ENCODE measurements at regions of chr16 and their contacts with region 1.

Region 1: DNA sequence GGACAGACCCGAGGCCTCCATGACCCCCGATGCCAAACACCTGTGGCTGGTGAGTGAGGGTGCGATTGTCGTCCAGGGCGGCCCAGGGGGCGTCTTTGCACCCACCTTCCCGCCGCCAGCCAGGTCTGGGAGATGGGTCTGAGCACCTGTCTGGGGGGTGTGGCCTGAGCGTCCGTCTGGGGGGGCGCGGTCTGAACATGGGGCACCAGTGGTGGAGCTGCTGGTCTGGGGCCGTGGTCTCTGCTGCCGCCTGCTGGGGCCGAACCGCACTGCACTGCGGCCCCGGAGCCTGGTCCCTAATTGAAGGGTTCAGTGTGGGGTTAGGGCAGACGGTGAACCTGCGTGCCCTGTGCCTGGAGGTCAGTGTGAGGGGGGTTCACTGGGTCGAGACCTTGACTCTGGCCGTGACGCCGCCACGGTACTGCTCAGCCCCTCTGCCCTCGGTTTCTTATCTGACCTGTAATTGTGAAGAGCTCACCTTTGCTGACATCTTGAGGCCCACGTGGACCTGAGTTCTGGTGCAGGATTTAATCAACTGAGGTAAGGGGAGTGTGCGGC is 12.6 kb upstream of the TCF25 start:
- DNase-seq: peak; percentile 32
- H3K4me3 ChIP-seq: no peak overlapping the region
- H3K27ac ChIP-seq: no peak overlapping the region
- H3K4me1 ChIP-seq: peaks cover 23% of the 10 kb centered on the region
- H3K27me3 ChIP-seq: no peaks in the 10 kb centered on the region
- CTCF ChIP-seq: peak; percentile 91 to 98

Region 2: DNA sequence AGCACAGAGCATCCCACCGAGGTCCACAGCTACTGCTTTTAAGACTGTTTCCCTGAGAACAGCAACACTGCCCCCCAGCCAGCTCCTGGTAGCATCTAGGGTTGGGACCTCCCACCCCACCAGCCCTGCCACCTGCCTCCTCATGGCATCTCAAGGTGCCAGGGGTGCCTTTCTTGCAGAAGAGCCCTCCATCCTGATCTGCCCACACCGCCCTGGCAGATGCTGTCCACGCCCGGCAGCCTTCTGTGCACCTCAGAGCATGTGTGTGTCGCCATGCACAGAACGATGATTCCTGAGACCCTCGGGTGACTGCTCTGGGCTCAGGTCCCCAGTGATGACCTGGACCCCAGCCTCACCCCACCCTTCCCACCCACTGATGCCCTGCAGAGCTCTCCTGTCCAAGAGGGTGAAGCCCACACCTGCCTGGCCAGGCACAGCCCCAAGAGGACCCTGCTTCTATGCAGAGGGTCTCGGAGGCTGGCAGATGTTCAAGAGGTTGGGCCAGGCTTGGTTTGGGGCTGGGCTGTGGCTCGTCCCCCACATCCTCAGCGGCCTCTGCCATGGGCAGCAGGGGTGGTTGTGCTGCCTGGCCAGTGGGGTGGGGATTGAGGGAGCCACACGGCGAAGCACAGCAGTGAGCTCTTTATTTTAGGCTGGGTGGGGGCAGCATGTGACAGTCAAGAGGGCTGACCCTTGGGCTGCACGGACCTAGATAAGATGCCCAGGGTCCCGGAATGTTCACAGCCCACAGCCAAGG is 154.1 kb before region 1 on chr16:
- CTCF ChIA-PET with region 1: interaction called, 4 read pairs
- dilution Hi-C with region 1: no loop called
- in situ Hi-C with region 1: no loop called
- intact Hi-C with region 1: loop called (anchors 1 kb)
- DNase-seq: no peak
- H3K4me3 ChIP-seq: no peak overlapping the region
- H3K27ac ChIP-seq: no peak overlapping the region
- H3K4me1 ChIP-seq: peaks cover 3% of the 10 kb centered on the region
- H3K27me3 ChIP-seq: no peaks in the 10 kb centered on the region
- CTCF ChIP-seq: no peak

Region 3: GRCh38 chr16:89791278-89791995 is 69.4 kb before region 1 on chr16:
- CTCF ChIA-PET with region 1: interaction called, 4 read pairs
- dilution Hi-C with region 1: no loop called
- in situ Hi-C with region 1: no loop called
- intact Hi-C with region 1: loop called (anchors 2 kb)
- DNase-seq: no peak
- H3K4me3 ChIP-seq: no peak overlapping the region
- H3K27ac ChIP-seq: no peak overlapping the region
- H3K4me1 ChIP-seq: no peaks in the 10 kb centered on the region
- H3K27me3 ChIP-seq: no peaks in the 10 kb centered on the region
- CTCF ChIP-seq: no peak

Region 4: DNA sequence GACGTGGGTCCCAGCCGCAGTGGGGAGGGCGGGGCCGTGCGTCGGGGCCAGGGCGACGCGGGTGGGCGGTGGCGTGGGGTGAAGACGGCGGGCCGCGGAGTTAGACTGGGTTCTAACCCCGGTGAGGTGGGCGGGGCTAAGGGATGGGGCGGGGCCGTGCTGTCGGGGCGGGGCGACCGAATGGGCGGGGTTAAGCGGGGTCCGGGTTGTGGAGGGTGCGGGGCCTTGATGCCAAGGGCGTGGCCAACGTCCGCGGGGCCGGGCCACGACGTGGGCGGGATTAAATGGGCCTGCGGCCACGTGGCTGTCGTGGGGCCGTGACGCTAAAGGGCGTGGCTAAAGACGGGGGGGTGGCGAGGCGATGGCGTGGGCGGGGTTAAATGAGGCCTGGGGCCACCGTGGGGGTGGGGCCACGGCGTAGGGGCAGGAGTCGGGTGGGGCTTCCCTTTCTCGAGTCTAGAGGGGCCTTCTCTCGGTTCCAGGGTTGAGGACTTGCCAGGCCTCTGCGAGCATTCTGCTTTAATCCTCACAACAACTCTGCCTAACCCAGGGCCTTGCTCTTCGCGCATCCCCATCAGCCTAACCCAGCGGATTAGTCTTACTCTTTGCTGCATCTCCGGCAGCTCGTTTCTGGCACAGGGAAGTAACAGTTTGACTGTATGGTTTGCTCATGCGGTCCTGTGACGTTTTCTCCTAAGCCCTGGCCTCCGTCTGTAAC is 13.3 kb after region 1 on chr16:
- CTCF ChIA-PET with region 1: no interaction called
- dilution Hi-C with region 1: no loop called
- in situ Hi-C with region 1: no loop called
- intact Hi-C with region 1: loop called (anchors 1 kb)
- DNase-seq: peak; percentile 91
- H3K4me3 ChIP-seq: peak overlapping the region; percentile 93 to 99 (median 96)
- H3K27ac ChIP-seq: peak overlapping the region; percentile 62
- H3K4me1 ChIP-seq: peaks cover 22% of the 10 kb centered on the region
- H3K27me3 ChIP-seq: no peaks in the 10 kb centered on the region
- CTCF ChIP-seq: no peak

Region 5: GRCh38 chr16:89958068-89958467 is 97.2 kb after region 1 on chr16:
- CTCF ChIA-PET with region 1: no interaction called
- dilution Hi-C with region 1: no loop called
- in situ Hi-C with region 1: no loop called
- intact Hi-C with region 1: no loop called
- DNase-seq: no peak
- H3K4me3 ChIP-seq: no peak overlapping the region
- H3K27ac ChIP-seq: no peak overlapping the region
- H3K4me1 ChIP-seq: no peaks in the 10 kb centered on the region
- H3K27me3 ChIP-seq: no peaks in the 10 kb centered on the region
- CTCF ChIP-seq: no peak